WTC11 (cell line): ENCODE measurements at regions of chr10 and their contacts with region 1.

Region 1: DNA sequence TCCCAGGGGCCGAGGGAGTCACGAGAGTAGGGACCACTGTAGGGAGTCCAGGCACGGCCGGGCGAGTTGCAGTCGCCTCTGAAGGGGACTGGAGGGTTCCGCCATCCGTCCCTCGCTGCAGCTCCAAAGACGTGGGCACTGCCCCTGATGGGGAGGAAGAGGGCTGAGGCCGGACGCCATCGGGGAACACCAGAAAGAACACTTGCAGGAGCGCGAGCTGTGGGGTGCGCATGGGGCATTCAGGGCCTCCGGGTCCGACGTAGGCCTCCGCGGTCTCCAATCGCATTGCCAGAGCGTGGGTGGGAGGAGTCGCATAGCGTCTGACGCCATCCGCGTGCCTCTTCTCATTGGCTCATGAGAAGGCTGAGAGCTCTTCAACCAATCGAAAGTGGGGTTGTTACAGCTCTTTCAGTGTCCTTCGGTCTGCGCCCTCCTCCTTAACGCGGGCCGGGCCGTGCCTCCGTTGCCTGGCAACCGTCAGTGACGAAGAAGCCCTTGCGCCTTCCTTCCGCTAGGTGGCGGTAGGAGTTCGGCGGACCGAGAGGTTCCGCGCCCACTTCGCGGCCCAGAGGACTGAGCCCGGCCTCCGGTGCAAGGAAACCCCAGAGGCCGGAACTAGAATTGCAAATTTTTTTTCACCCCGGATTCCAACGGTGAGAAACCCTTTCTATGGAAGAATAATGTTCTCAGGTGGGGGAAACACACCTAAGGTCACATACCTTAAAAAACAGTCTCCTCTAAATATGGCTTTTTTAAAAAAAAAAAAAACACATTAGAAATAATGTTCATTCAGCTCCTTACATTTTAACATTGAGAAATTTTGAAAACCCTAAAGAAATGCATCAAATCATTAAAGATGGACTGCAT is at the start of gene TCTN3:
- DNase-seq: peak; percentile 97
- ATAC-seq: peak; percentile 100
- H3K4me3 Mint-ChIP-seq: peak within 1 kb of the TSS; percentile 99
- H3K27ac Mint-ChIP-seq: peak within 1 kb of the TSS; percentile 97
- H3K4me1 Mint-ChIP-seq: peaks cover 17% of the 10 kb centered on the region
- H3K27me3 Mint-ChIP-seq: peaks cover 7% of the 10 kb centered on the region
- CTCF ChIP-seq: peak; percentile 99
- total RNA-seq, gene TCTN3: 26.4 to 33.5 TPM (median 29.3 TPM) in 3 replicates

Region 2: GRCh38 chr10:95456516-95456915 is 237.4 kb before region 1 on chr10:
- CTCF ChIA-PET with region 1: no interaction called
- POLR2A ChIA-PET with region 1: no interaction called
- DNase-seq: no peak
- ATAC-seq: peak; percentile 67
- H3K4me3 Mint-ChIP-seq: no peak overlapping the region
- H3K27ac Mint-ChIP-seq: no peak overlapping the region
- H3K4me1 Mint-ChIP-seq: peaks cover 39% of the 10 kb centered on the region
- H3K27me3 Mint-ChIP-seq: no peaks in the 10 kb centered on the region
- CTCF ChIP-seq: no peak

Region 3: DNA sequence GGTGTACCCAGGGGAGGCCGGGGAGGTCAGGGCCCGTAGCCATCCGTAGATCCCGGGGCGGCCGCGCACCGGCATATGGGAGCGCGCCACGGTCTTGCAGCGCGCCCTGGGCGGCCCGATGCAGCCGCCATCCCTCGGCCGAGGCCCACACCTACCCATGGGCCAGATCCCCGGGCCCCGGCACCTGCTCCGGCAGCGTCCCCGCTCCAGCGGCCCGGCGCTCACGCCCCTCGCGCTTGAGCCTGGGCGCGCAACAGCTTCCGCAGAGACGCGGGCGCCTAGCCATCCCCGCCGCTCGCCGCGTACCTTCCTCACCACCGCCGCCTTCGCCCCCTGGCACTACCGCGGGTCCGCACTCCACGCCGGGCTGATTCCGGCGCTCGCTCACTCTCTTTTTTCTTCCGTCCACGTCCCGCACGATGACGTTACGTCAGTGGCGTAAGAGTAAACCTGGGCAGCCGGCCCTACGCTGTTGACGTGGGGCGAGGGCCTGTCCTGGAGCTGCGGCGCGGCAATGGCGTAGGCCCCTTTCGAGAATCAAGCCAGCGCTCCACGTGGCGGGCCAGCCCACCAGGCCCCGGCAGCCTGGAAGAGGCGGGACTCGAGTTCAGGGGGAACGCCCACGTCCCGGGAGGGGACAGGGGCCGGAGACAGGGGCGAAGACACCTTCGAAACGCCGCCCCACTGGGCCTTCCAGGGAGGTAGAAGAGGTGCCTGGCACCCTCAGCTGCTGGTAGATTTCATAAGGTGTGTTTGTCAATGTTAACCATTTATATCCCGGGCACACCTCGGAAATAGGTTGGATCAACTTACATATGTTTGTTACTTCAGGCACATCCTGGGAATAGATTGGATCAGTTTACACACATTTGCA is 37.4 kb before region 1 on chr10 and contains the start of gene ALDH18A1:
- CTCF ChIA-PET with region 1: interaction called, 24 read pairs
- POLR2A ChIA-PET with region 1: no interaction called
- DNase-seq: peak; percentile 90
- ATAC-seq: peak; percentile 91
- H3K4me3 Mint-ChIP-seq: peak within 1 kb of the TSS; percentile 98
- H3K27ac Mint-ChIP-seq: peak within 1 kb of the TSS; percentile 86; the same call in 1 of the 2 replicates
- H3K4me1 Mint-ChIP-seq: peaks cover 13% of the 10 kb centered on the region
- H3K27me3 Mint-ChIP-seq: peaks cover 3% of the 10 kb centered on the region
- CTCF ChIP-seq: no peak
- total RNA-seq, gene ALDH18A1: 105 to 115 TPM (median 107 TPM) in 3 replicates

Region 4: GRCh38 chr10:95706986-95707385 is 13.1 kb after region 1 on chr10:
- CTCF ChIA-PET with region 1: interaction called, 18 read pairs
- POLR2A ChIA-PET with region 1: no interaction called
- DNase-seq: no peak
- ATAC-seq: no peak
- H3K4me3 Mint-ChIP-seq: no peak overlapping the region
- H3K27ac Mint-ChIP-seq: no peak overlapping the region
- H3K4me1 Mint-ChIP-seq: no peaks in the 10 kb centered on the region
- H3K27me3 Mint-ChIP-seq: no peaks in the 10 kb centered on the region; the same call in 1 of the 2 replicates
- CTCF ChIP-seq: no peak

Region 5: DNA sequence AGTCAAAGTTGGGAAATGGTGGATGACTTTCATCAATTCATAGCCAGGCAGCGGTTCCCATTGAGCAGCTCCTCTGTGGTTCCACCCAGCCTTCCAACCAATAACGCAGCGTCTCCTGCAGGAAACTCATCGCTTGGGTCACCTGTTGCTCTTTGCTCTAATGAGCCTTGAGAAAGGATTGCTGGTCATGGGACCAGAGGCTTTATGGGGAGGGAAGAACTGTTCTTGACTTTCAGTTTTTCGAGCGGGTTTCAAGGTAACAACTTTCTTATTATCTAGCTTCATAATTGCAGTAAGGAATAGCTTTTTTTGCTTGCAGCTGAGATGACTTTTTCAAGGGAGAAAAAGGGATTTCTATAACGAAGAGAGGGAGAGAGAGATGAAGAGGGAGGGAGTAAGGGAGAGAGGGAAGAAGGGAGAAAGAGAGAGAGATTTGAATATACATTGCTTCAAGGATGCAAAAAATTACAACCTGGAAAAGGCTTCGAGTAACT is 61.7 kb after region 1 on chr10:
- CTCF ChIA-PET with region 1: interaction called, 32 read pairs
- POLR2A ChIA-PET with region 1: interaction called, 3 read pairs
- DNase-seq: peak; percentile 46
- ATAC-seq: peak; percentile 84
- H3K4me3 Mint-ChIP-seq: peak overlapping the region; percentile 85
- H3K27ac Mint-ChIP-seq: peak overlapping the region; percentile 54; the same call in 1 of the 2 replicates
- H3K4me1 Mint-ChIP-seq: peaks cover 21% of the 10 kb centered on the region
- H3K27me3 Mint-ChIP-seq: peaks cover 19% of the 10 kb centered on the region
- CTCF ChIP-seq: no peak

Region 6: DNA sequence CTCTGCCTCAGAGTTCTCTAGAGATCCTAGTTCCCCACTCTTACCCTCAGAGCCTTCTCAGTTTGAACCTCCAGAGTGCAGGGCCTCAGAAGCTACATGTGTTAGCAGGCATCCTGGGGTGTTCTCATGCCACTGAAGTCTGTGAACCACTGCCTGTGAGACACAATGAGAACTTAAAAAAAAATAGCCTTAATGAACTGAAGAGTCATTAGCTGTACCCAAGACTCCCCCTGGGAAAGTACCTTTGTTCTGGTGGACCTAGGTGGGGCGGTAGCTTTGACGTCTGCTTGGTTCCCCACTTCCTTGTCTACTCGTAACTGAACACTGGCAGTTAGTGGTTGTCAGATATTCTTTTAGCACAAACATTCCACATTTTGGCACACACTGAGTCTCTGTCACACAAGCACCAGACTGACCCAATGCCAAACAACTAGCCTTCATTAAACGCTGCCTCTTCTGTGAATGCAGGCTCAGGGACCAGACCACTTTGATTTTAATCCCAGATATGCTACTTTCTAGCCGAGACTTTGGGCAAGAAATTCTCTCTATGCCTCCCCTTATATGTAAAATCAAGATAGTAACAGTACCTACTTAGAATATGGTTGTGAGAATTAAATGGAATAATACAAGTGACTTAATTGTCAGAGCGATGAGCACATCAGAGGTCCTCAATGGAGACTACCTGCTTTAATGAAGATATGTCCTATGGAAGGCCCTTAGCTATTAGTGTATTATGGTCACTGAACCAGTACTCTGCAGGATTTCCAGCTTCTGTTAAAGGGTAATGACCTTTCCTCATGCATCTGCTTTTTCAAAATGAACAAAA is 138.5 kb after region 1 on chr10:
- CTCF ChIA-PET with region 1: interaction called, 27 read pairs
- POLR2A ChIA-PET with region 1: no interaction called
- DNase-seq: no peak
- ATAC-seq: no peak
- H3K4me3 Mint-ChIP-seq: no peak overlapping the region
- H3K27ac Mint-ChIP-seq: no peak overlapping the region
- H3K4me1 Mint-ChIP-seq: peaks cover 9% of the 10 kb centered on the region
- H3K27me3 Mint-ChIP-seq: no peaks in the 10 kb centered on the region; the same call in 1 of the 2 replicates
- CTCF ChIP-seq: no peak

Region 7: DNA sequence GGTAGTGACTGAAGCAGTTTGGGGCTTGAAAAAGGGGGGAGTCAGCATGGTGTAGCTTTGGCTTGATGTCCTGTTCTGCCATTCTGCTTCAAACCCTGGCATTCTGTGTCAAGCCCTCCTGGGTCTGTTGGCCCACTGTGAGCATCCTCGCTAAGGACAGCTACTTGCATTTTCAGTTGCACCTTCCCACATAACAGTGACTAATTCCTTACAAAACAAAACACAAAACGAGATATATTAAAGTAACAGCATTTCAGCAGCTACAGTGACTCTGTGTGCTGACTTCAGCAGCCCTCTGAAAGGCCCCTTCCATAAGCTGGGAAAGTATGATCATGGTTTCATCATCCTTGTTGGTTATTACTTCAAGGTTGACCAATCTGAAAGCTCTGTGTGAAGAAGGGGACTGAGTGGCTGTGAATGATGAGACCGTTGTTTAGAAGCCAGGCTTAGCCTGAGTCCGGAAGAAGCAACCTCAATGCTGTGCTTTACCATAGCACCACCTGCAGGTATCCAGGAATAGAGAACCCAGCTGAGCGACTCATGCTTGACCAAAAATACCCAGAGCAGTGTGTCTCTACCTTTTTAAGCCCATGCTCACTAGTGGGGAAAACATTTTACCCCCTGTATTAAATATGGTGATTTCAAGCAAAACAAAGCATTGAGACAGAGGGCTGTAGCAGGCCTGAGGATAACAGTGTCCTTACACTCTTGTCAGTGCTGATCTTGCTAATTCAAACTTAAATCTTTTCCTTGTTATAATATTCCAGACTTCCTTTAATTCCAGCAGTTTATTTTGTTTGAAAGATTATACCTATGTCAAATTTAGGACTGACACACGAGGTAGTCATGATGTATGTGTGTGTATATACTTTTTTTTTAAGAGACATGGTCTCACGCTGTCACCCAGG is 171.3 kb after region 1 on chr10:
- CTCF ChIA-PET with region 1: interaction called, 62 read pairs
- POLR2A ChIA-PET with region 1: interaction called, 3 read pairs
- DNase-seq: peak; percentile 36
- ATAC-seq: peak; percentile 99
- H3K4me3 Mint-ChIP-seq: no peak overlapping the region
- H3K27ac Mint-ChIP-seq: peak overlapping the region; percentile 9; the same call in 1 of the 2 replicates
- H3K4me1 Mint-ChIP-seq: no peaks in the 10 kb centered on the region
- H3K27me3 Mint-ChIP-seq: no peaks in the 10 kb centered on the region
- CTCF ChIP-seq: peak; percentile 32; the same call in 1 of the 2 replicates